Naive thymus-derived CD4-positive, alpha-beta T cell (primary cell): ENCODE measurements at regions of chr19 and their contacts with region 1.

Region 1: GRCh38 chr19:50511068-50511822 is at the start of gene JOSD2:
- DNase-seq: peak; percentile 89 to 99 (median 96)
- ATAC-seq: peak; percentile 94
- H3K4me3 ChIP-seq: peak within 1 kb of the TSS; percentile 75
- H3K4me3 Mint-ChIP-seq: peak within 1 kb of the TSS; percentile 75 to 97 (median 88)
- H3K27ac ChIP-seq: peak within 1 kb of the TSS; percentile 86
- H3K27ac Mint-ChIP-seq: peak within 1 kb of the TSS; percentile 87 to 99 (median 97)
- H3K4me1 ChIP-seq: peaks cover 7 to 16% of the 10 kb centered on the region in 2 donors
- H3K4me1 Mint-ChIP-seq: peaks cover 0 to 27% (median 19%) of the 10 kb centered on the region in 7 donors
- H3K27me3 ChIP-seq: no peaks in the 10 kb centered on the region
- H3K27me3 Mint-ChIP-seq: peaks cover 0 to 16% (median 6%) of the 10 kb centered on the region in 5 donors
- total RNA-seq, gene JOSD2: 13.0 to 45.9 (median 22.7) TPM

Region 2: DNA sequence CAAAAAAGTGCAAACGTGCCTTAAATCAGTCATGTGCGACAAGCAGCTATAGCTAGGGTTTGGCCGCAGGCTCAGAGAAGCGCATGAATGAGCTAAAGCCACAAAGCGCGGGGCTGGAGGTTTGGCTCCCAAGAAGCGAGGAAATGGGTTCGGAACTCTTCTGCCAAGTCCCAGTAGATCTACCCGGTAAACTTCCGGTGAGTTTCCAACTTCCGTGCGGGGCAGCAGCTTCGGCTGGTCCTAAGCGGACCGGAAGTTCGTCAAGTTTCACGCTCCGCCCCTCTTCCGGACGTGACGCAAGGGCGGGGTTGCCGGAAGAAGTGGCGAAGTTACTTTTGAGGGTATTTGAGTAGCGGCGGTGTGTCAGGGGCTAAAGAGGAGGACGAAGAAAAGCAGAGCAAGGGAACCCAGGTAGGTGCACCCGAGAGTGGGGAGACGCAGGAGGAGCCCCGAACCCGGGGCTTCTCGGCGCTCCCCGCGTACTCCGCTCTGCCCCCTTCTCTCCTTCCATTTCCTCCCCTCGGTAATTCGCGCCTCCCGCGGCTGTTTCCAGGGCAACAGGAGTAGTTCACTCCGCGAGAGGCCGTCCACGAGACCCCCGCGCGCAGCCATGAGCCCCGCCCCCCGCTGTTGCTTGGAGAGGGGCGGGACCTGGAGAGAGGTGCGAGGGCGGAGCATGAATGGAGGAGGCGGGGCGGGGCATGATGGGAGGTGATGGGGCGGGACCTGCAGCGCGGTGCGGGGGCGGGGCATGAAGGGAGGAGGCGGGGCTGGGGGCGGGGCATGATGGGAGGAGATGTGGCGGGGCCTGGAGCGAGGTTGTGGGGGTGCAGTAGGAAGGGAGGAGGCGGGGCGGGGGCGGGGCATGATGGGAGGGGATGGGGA is 134.8 kb before region 1 on chr19 and contains the start of gene NR1H2:
- CTCF ChIA-PET with region 1: no interaction called
- POLR2A ChIA-PET with region 1: interaction called, 5 read pairs
- intact Hi-C with region 1: loop called (anchors 1 kb)
- DNase-seq: peak; percentile 89 to 97 (median 95)
- ATAC-seq: peak; percentile 94
- H3K4me3 ChIP-seq: peak within 1 kb of the TSS; percentile 99
- H3K4me3 Mint-ChIP-seq: peak within 1 kb of the TSS; percentile 92 to 100 (median 98)
- H3K27ac ChIP-seq: peak within 1 kb of the TSS; percentile 100
- H3K27ac Mint-ChIP-seq: peak within 1 kb of the TSS; percentile 99 to 100 (median 100)
- H3K4me1 ChIP-seq: peaks cover 4 to 10% of the 10 kb centered on the region in 2 donors
- H3K4me1 Mint-ChIP-seq: peaks cover 12 to 37% (median 24%) of the 10 kb centered on the region in 7 donors
- H3K27me3 ChIP-seq: no peaks in the 10 kb centered on the region
- H3K27me3 Mint-ChIP-seq: no peaks in the 10 kb centered on the region
- total RNA-seq, gene NR1H2: 66.6 to 284 (median 114) TPM

Region 3: GRCh38 chr19:50476224-50476942 is 34.9 kb before region 1 on chr19 and contains the starts of genes EMC10 and GARIN5A:
- CTCF ChIA-PET with region 1: no interaction called
- POLR2A ChIA-PET with region 1: interaction called, 7 read pairs
- intact Hi-C with region 1: loop called (anchors 1 kb)
- DNase-seq: peak; percentile 92 to 96 (median 95)
- ATAC-seq: peak; percentile 97
- H3K4me3 ChIP-seq: peak within 1 kb of the TSS; percentile 96
- H3K4me3 Mint-ChIP-seq: peak within 1 kb of the TSS; percentile 94 to 99 (median 98)
- H3K27ac ChIP-seq: peak within 1 kb of the TSS; percentile 96
- H3K27ac Mint-ChIP-seq: peak within 1 kb of the TSS; percentile 88 to 98 (median 96)
- H3K4me1 ChIP-seq: peaks cover 14 to 19% of the 10 kb centered on the region in 2 donors
- H3K4me1 Mint-ChIP-seq: peaks cover 21 to 36% (median 27%) of the 10 kb centered on the region in 7 donors
- H3K27me3 ChIP-seq: no peaks in the 10 kb centered on the region
- H3K27me3 Mint-ChIP-seq: no peaks in the 10 kb centered on the region
- total RNA-seq, gene EMC10: 75.5 to 95.2 (median 88.1) TPM
- total RNA-seq, gene GARIN5A: 0.59 to 0.93 (median 0.68) TPM in 4 of 5 experiments, not detected in the other

Region 4: DNA sequence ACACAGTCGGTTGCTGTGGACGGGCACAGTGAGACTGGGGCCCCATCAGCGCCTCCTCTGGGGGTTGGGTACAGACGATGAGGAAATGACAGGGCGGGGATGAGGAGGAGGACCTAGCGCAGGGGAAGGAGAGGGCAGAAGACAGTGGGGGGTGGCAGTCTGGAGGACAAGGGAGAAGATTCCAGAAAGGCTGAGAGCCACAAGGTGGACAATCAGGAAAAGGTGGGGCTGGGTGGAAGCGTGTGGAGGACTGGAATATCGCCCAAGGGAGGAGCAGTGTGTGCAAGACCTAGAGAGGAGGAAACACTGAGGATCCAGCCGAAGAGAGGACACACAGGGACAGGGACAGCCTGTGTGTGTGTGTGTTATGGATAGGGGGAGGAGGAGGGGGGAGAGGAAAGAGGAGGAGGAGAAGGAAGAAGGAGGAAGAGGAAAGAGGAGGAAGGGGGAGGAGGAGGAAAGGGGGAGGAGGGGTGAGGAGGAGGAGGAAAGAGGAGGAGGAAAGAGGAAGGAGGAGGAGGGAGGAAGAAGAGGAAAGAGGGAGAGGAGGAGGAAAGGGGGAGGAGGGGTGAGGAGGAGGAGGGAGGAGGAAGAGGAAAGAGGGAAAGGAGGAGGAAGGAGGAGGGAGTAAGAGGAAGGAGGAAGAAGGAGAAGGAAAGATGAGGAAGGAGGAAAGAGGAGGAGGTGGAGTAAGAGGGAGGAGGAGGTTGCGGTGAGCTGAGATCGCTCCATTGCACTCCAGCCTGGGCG is 18.8 kb before region 1 on chr19:
- CTCF ChIA-PET with region 1: no interaction called
- POLR2A ChIA-PET with region 1: no interaction called
- intact Hi-C with region 1: no loop called
- DNase-seq: peak in 2 of 9 donors; percentile 30 to 40
- ATAC-seq: peak; percentile 89
- H3K4me3 ChIP-seq: no peak overlapping the region
- H3K4me3 Mint-ChIP-seq: peak overlapping the region; percentile 27 to 87 (median 58)
- H3K27ac ChIP-seq: no peak overlapping the region
- H3K27ac Mint-ChIP-seq: peak overlapping the region in 6 of 9 donors; percentile 16 to 84 (median 61)
- H3K4me1 ChIP-seq: peaks cover 0 to 13% of the 10 kb centered on the region in 2 donors
- H3K4me1 Mint-ChIP-seq: peaks cover 12 to 36% (median 33%) of the 10 kb centered on the region in 7 donors
- H3K27me3 ChIP-seq: no peaks in the 10 kb centered on the region
- H3K27me3 Mint-ChIP-seq: peaks cover 0 to 8% (median 0%) of the 10 kb centered on the region in 5 donors

Region 5: DNA sequence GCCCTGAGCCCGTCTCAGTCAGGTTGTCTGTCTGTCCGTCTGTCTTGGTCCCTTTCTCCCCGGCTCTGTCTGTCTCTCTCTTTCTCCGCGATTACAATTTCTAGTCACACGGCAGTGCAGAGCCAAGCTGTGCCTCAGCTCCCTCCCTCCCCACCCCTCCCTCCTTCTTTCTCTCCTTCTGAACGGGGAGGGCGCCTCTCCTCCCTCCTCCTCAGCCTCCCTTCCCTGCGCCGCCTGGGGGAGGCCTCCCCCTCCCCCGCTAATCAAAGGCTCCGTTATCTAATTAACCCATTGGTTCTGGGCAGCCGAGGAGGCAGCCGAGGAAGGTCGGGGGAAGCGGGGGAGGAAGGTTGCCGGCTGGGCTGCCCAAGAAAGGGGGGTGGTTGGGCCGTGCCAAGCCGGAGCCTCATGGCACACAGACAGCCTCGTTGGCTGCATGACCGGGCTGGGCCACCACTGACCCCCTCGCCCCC is 40.5 kb after region 1 on chr19:
- CTCF ChIA-PET with region 1: no interaction called
- POLR2A ChIA-PET with region 1: no interaction called
- intact Hi-C with region 1: no loop called
- DNase-seq: no peak
- ATAC-seq: no peak
- H3K4me3 ChIP-seq: no peak overlapping the region
- H3K4me3 Mint-ChIP-seq: peak overlapping the region in 1 of 10 donors; percentile 65
- H3K27ac ChIP-seq: no peak overlapping the region
- H3K27ac Mint-ChIP-seq: no peak overlapping the region
- H3K4me1 ChIP-seq: no peaks in the 10 kb centered on the region
- H3K4me1 Mint-ChIP-seq: peaks cover 9 to 22% (median 12%) of the 10 kb centered on the region in 7 donors
- H3K27me3 ChIP-seq: peaks cover 0 to 4% of the 10 kb centered on the region in 2 donors
- H3K27me3 Mint-ChIP-seq: peaks cover 51 to 71% (median 55%) of the 10 kb centered on the region in 5 donors

Region 6: GRCh38 chr19:50679177-50680125 is 168.2 kb after region 1 on chr19:
- CTCF ChIA-PET with region 1: no interaction called
- POLR2A ChIA-PET with region 1: no interaction called
- intact Hi-C with region 1: no loop called
- DNase-seq: peak; percentile 44 to 79 (median 62)
- ATAC-seq: peak; percentile 93
- H3K4me3 ChIP-seq: no peak overlapping the region
- H3K4me3 Mint-ChIP-seq: no peak overlapping the region
- H3K27ac ChIP-seq: no peak overlapping the region
- H3K27ac Mint-ChIP-seq: peak overlapping the region in 2 of 9 donors; percentile 34 to 62
- H3K4me1 ChIP-seq: peaks cover 0 to 4% of the 10 kb centered on the region in 2 donors
- H3K4me1 Mint-ChIP-seq: peaks cover 3 to 11% (median 6%) of the 10 kb centered on the region in 7 donors
- H3K27me3 ChIP-seq: peaks cover 3 to 7% of the 10 kb centered on the region in 2 donors
- H3K27me3 Mint-ChIP-seq: peaks cover 15 to 67% (median 65%) of the 10 kb centered on the region in 5 donors